ENCODE measurements at regions of chr12 and their contacts with region 1.

Region 1: DNA sequence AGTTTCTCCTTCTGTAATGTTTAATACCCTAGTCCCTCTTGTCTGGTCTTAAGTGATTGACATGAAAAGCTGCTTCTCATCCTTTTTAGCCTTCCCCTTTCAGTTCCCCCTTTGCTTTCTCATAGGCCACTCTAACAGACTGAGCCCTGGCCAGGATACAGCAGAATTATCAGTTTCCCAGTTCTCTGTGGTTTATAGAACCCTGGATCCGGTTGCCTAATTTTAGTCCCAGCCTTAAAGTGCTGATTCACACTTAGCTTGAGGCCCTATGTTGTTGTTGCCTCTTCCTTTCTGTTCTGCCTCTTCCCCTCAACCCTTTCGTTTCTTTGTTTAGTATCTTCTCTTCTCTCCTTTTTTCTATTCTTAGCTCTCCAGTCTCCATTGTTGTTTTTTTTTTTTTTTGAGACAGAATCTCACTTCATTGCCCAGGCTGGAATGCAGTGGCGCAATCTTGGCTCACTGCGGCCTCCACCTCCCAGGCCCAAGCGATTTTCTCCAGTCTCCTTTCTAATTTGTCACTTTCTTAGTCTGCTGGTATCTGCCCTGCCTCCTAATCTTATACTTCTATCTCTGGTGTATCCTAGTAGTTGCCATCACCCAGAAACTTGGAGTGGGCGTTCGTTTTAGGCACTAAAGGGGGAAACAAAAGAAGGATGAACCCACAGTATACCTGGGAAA is 2.9 kb upstream of the BIN2 start:
- DNase-seq: peak in 2 of 9 donors; percentile 10 to 27
- ATAC-seq: peak; percentile 34
- H3K4me3 ChIP-seq: no peak overlapping the region
- H3K4me3 Mint-ChIP-seq: peak overlapping the region; percentile 49 to 85 (median 72)
- H3K27ac ChIP-seq: peak overlapping the region; percentile 60
- H3K27ac Mint-ChIP-seq: peak overlapping the region; percentile 76 to 96 (median 93)
- H3K4me1 ChIP-seq: peaks cover 51 to 67% of the 10 kb centered on the region in 2 donors
- H3K4me1 Mint-ChIP-seq: peaks cover 45 to 92% (median 67%) of the 10 kb centered on the region in 7 donors
- H3K27me3 ChIP-seq: no peaks in the 10 kb centered on the region
- H3K27me3 Mint-ChIP-seq: no peaks in the 10 kb centered on the region

Region 2: GRCh38 chr12:51083126-51083833 is 243.6 kb before region 1 on chr12 and contains the start of gene CSRNP2:
- CTCF ChIA-PET with region 1: no interaction called
- POLR2A ChIA-PET with region 1: no interaction called
- intact Hi-C with region 1: loop called in 1 of 2 experiments (anchors 5 kb)
- DNase-seq: peak; percentile 90 to 95 (median 94)
- ATAC-seq: peak; percentile 100
- H3K4me3 ChIP-seq: peak within 1 kb of the TSS; percentile 78
- H3K4me3 Mint-ChIP-seq: peak within 1 kb of the TSS; percentile 89 to 100 (median 96)
- H3K27ac ChIP-seq: peak within 1 kb of the TSS; percentile 97
- H3K27ac Mint-ChIP-seq: peak within 1 kb of the TSS; percentile 89 to 98 (median 93)
- H3K4me1 ChIP-seq: peaks cover 7% of the 10 kb centered on the region in 2 donors
- H3K4me1 Mint-ChIP-seq: peaks cover 22 to 46% (median 43%) of the 10 kb centered on the region in 7 donors
- H3K27me3 ChIP-seq: no peaks in the 10 kb centered on the region
- H3K27me3 Mint-ChIP-seq: no peaks in the 10 kb centered on the region
- total RNA-seq, gene CSRNP2: 20.0 to 38.7 (median 23.4) TPM

Region 3: DNA sequence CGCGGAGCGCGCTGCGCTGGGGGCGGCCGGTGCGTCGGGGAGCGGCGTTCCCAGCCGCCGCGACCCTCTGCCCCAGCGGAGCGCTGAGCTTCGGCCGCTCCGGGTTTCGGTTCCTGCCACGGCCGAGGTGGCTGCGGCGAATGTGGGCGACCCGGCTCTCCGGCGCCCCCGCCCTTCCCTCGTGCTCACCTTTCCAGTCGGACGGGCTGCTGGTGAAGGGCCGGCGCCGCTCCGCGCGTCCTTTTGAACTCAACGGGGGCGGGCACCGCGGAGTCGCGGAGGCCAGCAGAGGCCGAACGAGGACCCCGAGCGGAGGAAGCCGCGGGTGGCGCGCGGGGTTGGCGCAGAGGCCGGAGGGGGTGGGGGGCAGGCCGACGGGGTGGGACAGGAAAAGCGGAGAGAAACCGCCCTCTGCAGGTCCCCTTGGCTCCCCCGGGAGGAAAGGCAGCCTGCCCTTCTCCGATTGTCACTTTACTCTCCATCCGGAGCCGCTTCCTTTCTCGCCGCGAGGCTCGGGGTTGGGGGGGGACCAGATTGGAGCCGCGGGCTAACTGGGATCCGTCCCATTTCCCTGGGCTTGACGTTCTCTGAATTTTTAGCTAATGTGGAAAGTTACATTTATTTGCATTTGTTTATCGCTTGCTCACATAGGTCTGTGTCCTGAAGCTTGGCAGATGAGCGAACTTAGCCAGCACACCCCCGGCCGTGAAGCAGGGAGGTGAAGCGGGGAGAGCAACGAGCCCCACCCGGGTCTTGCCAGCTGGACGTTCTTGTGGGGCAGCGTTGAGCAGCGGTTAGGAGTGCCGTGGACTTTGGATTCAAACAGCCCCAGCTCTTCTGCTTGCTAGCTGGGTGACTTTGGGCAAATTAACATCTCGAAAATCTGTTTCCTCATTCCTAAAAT is 56.6 kb before region 1 on chr12 and contains the start of gene SMAGP:
- CTCF ChIA-PET with region 1: interaction called, 4 read pairs
- POLR2A ChIA-PET with region 1: interaction called, 19 read pairs
- intact Hi-C with region 1: loop called in 1 of 2 experiments (anchors 5 kb)
- DNase-seq: peak; percentile 13 to 62 (median 36)
- ATAC-seq: peak; percentile 68
- H3K4me3 ChIP-seq: peak within 1 kb of the TSS; percentile 57
- H3K4me3 Mint-ChIP-seq: peak within 1 kb of the TSS; percentile 90 to 98 (median 94)
- H3K27ac ChIP-seq: peak within 1 kb of the TSS; percentile 62
- H3K27ac Mint-ChIP-seq: peak within 1 kb of the TSS; percentile 55 to 96 (median 90)
- H3K4me1 ChIP-seq: peaks cover 5 to 20% of the 10 kb centered on the region in 2 donors
- H3K4me1 Mint-ChIP-seq: peaks cover 19 to 29% (median 24%) of the 10 kb centered on the region in 7 donors
- H3K27me3 ChIP-seq: no peaks in the 10 kb centered on the region
- H3K27me3 Mint-ChIP-seq: peaks cover 0 to 34% (median 0%) of the 10 kb centered on the region in 5 donors
- total RNA-seq, gene SMAGP: 1.5 to 7.4 (median 4.2) TPM

Region 4: DNA sequence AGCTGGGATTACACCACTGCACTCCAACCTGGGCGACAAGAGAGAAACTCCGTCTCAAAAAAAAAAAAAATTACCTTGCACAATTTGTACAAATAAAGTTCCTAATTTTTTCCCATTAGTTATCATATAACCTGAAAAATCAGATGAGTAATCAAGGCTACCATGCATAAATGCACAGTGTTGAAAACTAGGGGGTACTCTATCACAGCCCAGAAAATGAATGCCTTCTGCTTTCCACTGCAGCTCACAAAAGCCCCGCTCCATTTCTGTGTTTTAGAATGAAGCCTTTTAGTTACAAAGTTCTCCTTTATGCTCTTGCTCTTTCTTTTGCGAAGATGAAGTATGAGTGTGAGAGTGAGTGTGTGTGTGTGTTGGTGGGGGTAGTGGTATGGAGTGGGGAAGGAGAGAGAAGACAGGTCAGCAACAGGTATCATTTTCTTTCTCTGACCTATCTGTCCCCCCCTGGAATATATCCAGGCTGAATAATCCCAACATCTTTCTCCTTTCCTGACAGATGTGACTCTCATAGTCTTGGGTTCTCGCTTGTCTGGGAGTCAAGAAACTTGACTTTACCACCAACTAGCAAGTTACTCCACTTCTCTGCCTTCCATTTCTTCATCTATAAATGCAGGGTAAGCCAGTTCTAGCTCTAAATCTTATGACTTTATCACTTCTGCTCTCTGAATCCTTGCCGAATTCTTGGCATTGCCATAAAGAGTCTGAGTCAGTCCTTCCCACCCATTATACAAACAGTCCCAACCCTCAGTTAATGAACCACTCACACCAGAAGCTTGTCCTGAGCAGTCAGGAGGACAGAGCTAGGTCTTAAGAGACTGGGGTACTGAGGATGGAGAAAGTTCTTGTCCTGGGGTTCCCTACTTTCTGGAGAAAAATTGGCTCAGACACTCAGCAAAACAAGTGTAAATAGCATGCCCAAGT is 19.0 kb before region 1 on chr12:
- CTCF ChIA-PET with region 1: interaction called, 6 read pairs
- POLR2A ChIA-PET with region 1: interaction called, 320 read pairs
- intact Hi-C with region 1: no loop called
- DNase-seq: peak in 3 of 9 donors; percentile 24 to 45 (median 33)
- ATAC-seq: no peak
- H3K4me3 ChIP-seq: no peak overlapping the region
- H3K4me3 Mint-ChIP-seq: peak overlapping the region in 8 of 10 donors; percentile 22 to 60 (median 50)
- H3K27ac ChIP-seq: peak overlapping the region; percentile 23
- H3K27ac Mint-ChIP-seq: peak overlapping the region; percentile 65 to 91 (median 86)
- H3K4me1 ChIP-seq: peaks cover 18 to 31% of the 10 kb centered on the region in 2 donors
- H3K4me1 Mint-ChIP-seq: peaks cover 33 to 82% (median 63%) of the 10 kb centered on the region in 7 donors
- H3K27me3 ChIP-seq: no peaks in the 10 kb centered on the region
- H3K27me3 Mint-ChIP-seq: no peaks in the 10 kb centered on the region

Region 5: GRCh38 chr12:51391283-51392162 is 64.6 kb after region 1 on chr12 and contains the start of gene GALNT6:
- CTCF ChIA-PET with region 1: no interaction called
- POLR2A ChIA-PET with region 1: no interaction called
- intact Hi-C with region 1: loop called in 1 of 2 experiments (anchors 5 kb)
- DNase-seq: peak; percentile 50 to 74 (median 61)
- ATAC-seq: peak; percentile 76
- H3K4me3 ChIP-seq: peak within 1 kb of the TSS; percentile 67
- H3K4me3 Mint-ChIP-seq: peak within 1 kb of the TSS; percentile 77 to 96 (median 92)
- H3K27ac ChIP-seq: peak within 1 kb of the TSS; percentile 83
- H3K27ac Mint-ChIP-seq: peak within 1 kb of the TSS; percentile 84 to 96 (median 90)
- H3K4me1 ChIP-seq: peaks cover 50 to 68% of the 10 kb centered on the region in 2 donors
- H3K4me1 Mint-ChIP-seq: peaks cover 67 to 87% (median 74%) of the 10 kb centered on the region in 7 donors
- H3K27me3 ChIP-seq: no peaks in the 10 kb centered on the region
- H3K27me3 Mint-ChIP-seq: peaks cover 0 to 8% (median 0%) of the 10 kb centered on the region in 5 donors
- total RNA-seq, gene GALNT6: 2.5 to 19.5 (median 13.4) TPM

Region 6: GRCh38 chr12:51407604-51408003 is 80.7 kb after region 1 on chr12:
- CTCF ChIA-PET with region 1: no interaction called
- POLR2A ChIA-PET with region 1: no interaction called
- intact Hi-C with region 1: no loop called
- DNase-seq: no peak
- ATAC-seq: no peak
- H3K4me3 ChIP-seq: no peak overlapping the region
- H3K4me3 Mint-ChIP-seq: no peak overlapping the region
- H3K27ac ChIP-seq: no peak overlapping the region
- H3K27ac Mint-ChIP-seq: no peak overlapping the region
- H3K4me1 ChIP-seq: peaks cover 0 to 3% of the 10 kb centered on the region in 2 donors
- H3K4me1 Mint-ChIP-seq: peaks cover 0 to 13% (median 5%) of the 10 kb centered on the region in 7 donors
- H3K27me3 ChIP-seq: no peaks in the 10 kb centered on the region
- H3K27me3 Mint-ChIP-seq: peaks cover 0 to 12% (median 0%) of the 10 kb centered on the region in 5 donors

Measured in naive thymus-derived CD4-positive, alpha-beta T cell (primary cell).